Endothelial cell of umbilical vein (primary cell): ENCODE measurements at regions of chr4 and their contacts with region 1.

Region 1: GRCh38 chr4:184474263-184475095 is at the start of gene IRF2:
- DNase-seq: peak; percentile 98
- H3K4me3 ChIP-seq: peak within 1 kb of the TSS; percentile 86 to 98 (median 96)
- H3K27ac ChIP-seq: peak within 1 kb of the TSS; percentile 82
- H3K4me1 ChIP-seq: peaks cover 26% of the 10 kb centered on the region
- H3K27me3 ChIP-seq: no peaks in the 10 kb centered on the region
- CTCF ChIP-seq: no peak
- POLR2A ChIP-seq: peak; percentile 74
- total RNA-seq, gene IRF2: 24.6 and 27.6 TPM in 2 replicates

Region 2: DNA sequence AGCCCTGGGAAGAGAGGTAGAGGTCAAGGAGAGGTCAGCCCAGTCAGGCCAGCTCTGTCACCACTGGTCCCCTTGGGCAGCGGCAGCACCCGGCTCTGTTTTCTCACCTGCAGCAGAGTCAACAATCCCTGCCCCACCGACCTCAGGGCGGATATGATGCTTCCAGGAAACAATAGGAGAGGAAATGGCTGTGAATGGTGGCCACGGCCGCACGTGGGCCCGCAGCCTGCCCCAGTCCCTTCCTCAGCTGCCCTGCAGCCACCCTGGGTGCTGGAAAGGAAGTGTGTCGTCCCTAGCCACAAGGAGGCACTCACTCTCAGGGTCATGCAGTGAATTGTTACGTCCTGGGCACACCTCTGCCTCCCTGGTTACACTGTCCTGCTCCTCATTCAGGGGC is 164.3 kb before region 1 on chr4:
- CTCF ChIA-PET with region 1: no interaction called
- POLR2A ChIA-PET with region 1: no interaction called
- dilution Hi-C with region 1: no loop called
- intact Hi-C with region 1: loop called (anchors 1 kb)
- DNase-seq: peak; percentile 28
- H3K4me3 ChIP-seq: no peak overlapping the region
- H3K27ac ChIP-seq: peak overlapping the region; percentile 21
- H3K4me1 ChIP-seq: no peaks in the 10 kb centered on the region
- H3K27me3 ChIP-seq: no peaks in the 10 kb centered on the region
- CTCF ChIP-seq: peak; percentile 20 to 22
- POLR2A ChIP-seq: no peak

Region 3: DNA sequence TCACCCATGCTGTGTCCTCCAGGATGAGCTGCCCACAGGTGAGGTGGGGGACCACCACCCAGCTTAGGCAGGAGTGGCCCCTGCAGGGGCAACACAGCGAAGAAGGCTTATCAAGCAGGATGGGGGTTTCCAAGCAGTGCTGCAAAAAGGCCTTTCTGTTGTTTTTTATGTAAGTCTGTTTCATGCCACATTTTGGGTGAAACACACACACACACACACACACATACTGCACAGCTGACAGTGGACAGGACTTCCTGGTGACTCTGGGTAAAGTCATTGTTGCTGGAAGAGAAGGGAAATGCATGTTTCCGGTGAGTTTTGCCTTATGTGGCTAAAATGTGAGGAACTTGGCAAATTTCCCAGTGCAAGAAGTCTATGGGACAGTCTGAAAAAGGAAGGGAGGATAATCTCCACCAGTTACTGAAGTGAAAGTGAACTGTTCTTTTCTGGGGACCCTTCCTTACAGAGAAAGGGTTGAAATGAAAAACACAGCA is 119.3 kb before region 1 on chr4:
- CTCF ChIA-PET with region 1: no interaction called
- POLR2A ChIA-PET with region 1: no interaction called
- dilution Hi-C with region 1: no loop called
- intact Hi-C with region 1: loop called (anchors 1 kb)
- DNase-seq: peak; percentile 98
- H3K4me3 ChIP-seq: no peak overlapping the region
- H3K27ac ChIP-seq: peak overlapping the region; percentile 72
- H3K4me1 ChIP-seq: peaks cover 13% of the 10 kb centered on the region
- H3K27me3 ChIP-seq: no peaks in the 10 kb centered on the region
- CTCF ChIP-seq: no peak
- POLR2A ChIP-seq: peak; percentile 73

Region 4: DNA sequence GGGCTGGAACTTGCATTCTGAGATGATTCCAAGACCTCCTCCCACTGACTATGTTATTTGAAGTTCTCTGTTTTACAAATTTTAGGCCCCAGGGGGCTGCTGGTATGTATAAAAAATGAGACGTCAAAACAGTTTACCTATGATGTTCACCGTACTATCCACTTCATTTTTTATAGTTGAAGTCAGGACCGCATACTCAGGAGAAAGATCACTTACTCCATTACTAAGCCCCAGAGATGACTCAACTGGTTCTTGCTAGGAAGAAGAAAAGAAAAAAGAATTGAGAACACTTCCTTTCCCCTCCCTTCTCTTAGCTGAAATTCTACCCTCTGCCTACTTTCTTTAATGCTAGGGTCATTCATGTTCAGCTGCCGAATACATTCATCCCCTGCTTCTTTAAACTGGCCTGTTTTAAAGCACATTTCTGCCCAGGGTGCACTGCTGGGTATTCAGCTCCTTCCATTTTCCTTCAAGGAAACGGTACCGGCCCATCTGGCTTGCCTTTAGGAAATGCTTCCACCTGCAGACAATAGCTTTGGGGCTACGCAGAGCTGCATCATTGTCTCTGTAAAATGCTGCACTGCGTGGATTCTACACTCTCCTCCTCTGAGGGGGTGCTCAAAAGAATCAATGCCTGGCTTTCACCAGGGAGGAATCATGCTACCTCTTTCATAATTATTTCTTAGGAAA is 66.3 kb before region 1 on chr4:
- CTCF ChIA-PET with region 1: no interaction called
- POLR2A ChIA-PET with region 1: no interaction called
- dilution Hi-C with region 1: no loop called
- intact Hi-C with region 1: loop called (anchors 1 kb)
- DNase-seq: peak; percentile 21
- H3K4me3 ChIP-seq: no peak overlapping the region
- H3K27ac ChIP-seq: peak overlapping the region; percentile 6
- H3K4me1 ChIP-seq: peaks cover 25% of the 10 kb centered on the region
- H3K27me3 ChIP-seq: no peaks in the 10 kb centered on the region
- CTCF ChIP-seq: no peak
- POLR2A ChIP-seq: no peak

Region 5: DNA sequence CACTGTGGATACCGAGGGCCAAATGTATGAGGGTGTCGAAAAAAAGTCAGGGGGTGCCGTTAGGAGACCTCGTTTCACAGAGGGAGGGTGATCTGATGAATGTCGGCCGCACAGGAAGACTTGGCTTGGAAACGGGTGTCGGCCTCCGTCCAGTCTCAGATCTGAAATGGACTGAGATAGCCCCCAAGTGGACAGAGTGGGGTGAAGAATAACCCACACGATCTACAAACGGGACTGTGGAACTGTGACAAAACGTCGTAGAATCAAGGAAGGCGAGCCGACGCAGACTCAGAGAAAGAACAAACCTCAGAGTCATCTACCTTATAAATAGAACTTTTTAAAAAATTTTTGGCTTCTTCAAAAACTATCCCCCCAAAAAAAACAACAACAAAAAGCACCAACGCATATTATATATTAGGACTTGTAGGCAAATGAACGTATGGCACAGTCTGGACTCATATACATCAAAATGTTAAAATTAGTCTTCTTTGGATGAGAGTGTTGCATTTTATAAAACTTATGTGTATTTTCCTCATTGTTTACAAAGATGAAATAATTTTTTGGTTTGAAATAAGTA is 63.6 kb after region 1 on chr4:
- CTCF ChIA-PET with region 1: interaction called, 9 read pairs
- POLR2A ChIA-PET with region 1: interaction called, 6 read pairs
- dilution Hi-C with region 1: no loop called
- intact Hi-C with region 1: loop called (anchors 1 kb)
- DNase-seq: peak; percentile 92
- H3K4me3 ChIP-seq: peak overlapping the region; percentile 69 to 86 (median 71)
- H3K27ac ChIP-seq: peak overlapping the region; percentile 97
- H3K4me1 ChIP-seq: peaks cover 28% of the 10 kb centered on the region
- H3K27me3 ChIP-seq: no peaks in the 10 kb centered on the region
- CTCF ChIP-seq: peak; percentile 60 to 66
- POLR2A ChIP-seq: no peak

Region 6: DNA sequence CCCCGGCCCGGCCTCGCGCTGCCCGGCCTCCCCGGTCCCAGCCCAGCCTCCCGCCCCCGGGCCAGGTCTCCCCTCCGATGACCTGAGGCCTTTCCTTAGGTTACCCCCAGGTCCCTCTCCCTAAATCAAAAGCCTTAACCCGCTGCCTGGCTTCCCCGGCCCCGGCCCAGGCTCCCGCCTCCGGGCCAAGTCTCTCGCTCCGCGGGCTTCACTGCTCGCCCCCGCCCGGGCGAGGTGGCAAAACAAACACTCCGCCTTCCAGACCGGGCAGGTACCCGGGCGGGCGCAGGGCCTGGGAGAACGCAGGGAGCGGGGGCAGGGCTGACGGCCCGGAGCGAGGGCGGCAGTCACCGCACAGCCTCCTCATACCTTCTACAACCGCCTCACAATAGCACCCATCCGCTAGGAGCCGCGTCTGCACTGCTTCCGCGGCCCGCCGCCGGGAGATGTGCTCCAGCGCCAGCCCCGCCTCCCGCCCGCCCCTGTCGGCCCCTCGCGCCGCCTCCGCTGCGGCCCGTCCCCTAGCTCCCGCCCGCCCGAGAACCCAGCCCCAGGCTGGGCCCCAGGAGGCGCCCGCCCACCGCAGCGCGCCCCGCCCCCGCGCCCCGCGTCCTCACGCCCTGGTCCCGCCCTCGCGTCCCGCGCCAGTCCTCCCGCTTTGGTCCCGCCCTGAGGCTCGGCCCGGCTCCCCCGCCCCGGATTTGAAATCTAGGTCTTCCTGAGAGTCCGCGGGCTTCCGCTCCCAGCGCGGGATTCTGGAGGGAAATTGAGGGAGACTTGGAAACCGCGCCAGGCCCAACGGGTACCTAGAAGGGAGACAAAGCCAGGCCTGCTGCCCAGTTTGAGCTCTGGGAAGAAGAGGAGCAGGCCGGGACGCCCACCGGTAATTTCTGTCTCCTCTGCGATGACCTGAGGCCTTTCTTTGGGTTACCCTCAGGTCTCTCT is 174.8 kb after region 1 on chr4 and contains the starts of genes CASP3 and PRIMPOL:
- CTCF ChIA-PET with region 1: no interaction called
- POLR2A ChIA-PET with region 1: interaction called, 10 read pairs
- dilution Hi-C with region 1: no loop called
- intact Hi-C with region 1: loop called (anchors 1 kb)
- DNase-seq: peak; percentile 97
- H3K4me3 ChIP-seq: peak within 1 kb of the TSS; percentile 49 to 89 (median 78)
- H3K27ac ChIP-seq: peak within 1 kb of the TSS; percentile 96
- H3K4me1 ChIP-seq: peaks cover 44% of the 10 kb centered on the region
- H3K27me3 ChIP-seq: no peaks in the 10 kb centered on the region
- CTCF ChIP-seq: peak in 1 of 2 donors; percentile 37
- POLR2A ChIP-seq: peak; percentile 87
- total RNA-seq, gene CASP3: 54.5 and 66.1 TPM in 2 replicates
- total RNA-seq, gene PRIMPOL: 11.1 and 13.6 TPM in 2 replicates

Region 7: DNA sequence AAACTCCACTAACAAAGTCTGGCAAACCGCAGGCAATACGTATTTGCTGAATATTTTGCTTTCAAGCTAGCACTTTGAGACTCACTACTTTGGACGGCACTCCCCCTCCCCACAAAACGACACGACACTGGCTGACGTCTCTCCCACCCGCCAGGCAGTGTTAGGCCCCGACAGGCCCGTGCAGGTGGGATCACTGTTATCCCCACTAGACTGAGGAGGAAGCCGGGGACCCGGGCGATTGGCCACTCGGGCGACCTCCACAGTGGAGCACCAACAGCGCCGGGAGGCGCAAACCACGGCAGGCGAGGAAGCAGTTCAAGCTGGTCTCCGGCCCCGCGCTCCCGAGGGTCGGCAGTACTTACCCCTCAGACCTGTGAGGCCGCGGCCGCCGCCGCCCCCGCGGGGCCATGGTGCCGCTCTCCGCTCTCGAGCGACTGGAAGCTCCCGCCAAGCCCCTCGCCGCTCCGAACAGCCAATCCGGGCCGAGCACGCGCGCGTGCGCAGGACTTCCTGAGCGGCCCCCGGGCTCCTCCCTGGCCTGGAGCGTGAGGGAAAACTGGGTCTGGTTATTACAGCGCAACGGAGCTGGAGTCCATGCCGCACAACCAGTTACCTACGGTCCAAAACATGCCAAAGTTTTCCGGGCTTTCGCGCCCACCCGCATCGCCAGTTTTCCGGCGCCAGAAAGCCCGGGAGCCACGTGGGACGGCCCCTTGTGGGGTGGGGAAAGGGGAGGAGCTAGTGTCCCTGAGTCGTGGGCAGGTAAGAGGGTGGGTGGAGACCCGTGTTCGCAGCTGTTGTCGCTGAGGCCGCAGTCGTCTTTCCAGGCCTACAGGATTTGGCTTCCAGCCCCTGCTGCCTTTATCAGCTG is 259.4 kb after region 1 on chr4 and contains the start of gene CENPU:
- CTCF ChIA-PET with region 1: interaction called, 5 read pairs
- POLR2A ChIA-PET with region 1: no interaction called
- dilution Hi-C with region 1: no loop called
- intact Hi-C with region 1: loop called (anchors 1 kb)
- DNase-seq: peak; percentile 99
- H3K4me3 ChIP-seq: peak within 1 kb of the TSS; percentile 75 to 91 (median 88)
- H3K27ac ChIP-seq: peak within 1 kb of the TSS; percentile 72
- H3K4me1 ChIP-seq: peaks cover 16% of the 10 kb centered on the region
- H3K27me3 ChIP-seq: no peaks in the 10 kb centered on the region
- CTCF ChIP-seq: no peak
- POLR2A ChIP-seq: peak; percentile 68
- total RNA-seq, gene CENPU: 35.6 and 37.9 TPM in 2 replicates

Region 8: DNA sequence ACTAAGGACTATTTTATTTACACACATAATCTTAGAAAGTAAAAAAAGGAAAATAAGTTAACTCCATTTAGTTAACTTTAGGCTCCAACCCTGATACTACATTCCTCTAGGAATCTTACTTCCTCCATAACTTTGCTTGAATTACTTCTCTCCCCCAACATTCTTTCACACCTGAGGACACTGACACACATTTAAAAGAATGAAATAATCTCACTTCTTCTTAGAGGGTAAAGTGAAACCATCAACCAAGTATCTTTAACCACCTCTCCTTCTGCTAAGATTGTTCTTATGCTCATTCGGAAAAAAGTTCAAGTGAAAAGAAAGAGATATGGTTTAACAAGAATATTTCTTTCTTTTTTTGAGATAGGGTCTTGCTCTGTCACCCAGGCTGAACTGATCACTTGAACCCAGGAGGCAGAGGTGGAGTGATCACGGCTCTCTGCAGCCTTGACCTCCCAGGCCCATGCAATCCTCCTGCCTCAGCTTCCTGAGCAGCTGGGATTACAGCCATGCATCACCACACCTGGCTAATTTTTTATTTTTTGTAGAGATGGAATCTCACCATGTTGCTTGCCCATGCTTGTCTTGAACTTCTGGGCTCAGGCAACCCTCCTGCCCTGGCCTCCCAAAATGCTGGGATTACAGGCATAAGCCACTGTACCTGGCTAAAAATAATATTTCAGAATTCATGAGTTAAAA is 697.0 kb after region 1 on chr4:
- CTCF ChIA-PET with region 1: no interaction called
- POLR2A ChIA-PET with region 1: no interaction called
- dilution Hi-C with region 1: no loop called
- intact Hi-C with region 1: no loop called
- DNase-seq: no peak
- H3K4me3 ChIP-seq: no peak overlapping the region
- H3K27ac ChIP-seq: no peak overlapping the region
- H3K4me1 ChIP-seq: no peaks in the 10 kb centered on the region
- H3K27me3 ChIP-seq: no peaks in the 10 kb centered on the region
- CTCF ChIP-seq: no peak
- POLR2A ChIP-seq: no peak